MCF 10A (cell line): ENCODE measurements at regions of chr5 and their contacts with region 1.

Region 1: GRCh38 chr5:62155988-62156387 is 150.0 kb upstream of the KIF2A start:
- DNase-seq: no peak
- H3K4me3 Mint-ChIP-seq: no peak overlapping the region
- H3K27ac Mint-ChIP-seq: no peak overlapping the region
- H3K4me1 Mint-ChIP-seq: peaks cover 5% of the 10 kb centered on the region
- H3K27me3 Mint-ChIP-seq: no peaks in the 10 kb centered on the region
- CTCF ChIP-seq: no peak

Region 2: DNA sequence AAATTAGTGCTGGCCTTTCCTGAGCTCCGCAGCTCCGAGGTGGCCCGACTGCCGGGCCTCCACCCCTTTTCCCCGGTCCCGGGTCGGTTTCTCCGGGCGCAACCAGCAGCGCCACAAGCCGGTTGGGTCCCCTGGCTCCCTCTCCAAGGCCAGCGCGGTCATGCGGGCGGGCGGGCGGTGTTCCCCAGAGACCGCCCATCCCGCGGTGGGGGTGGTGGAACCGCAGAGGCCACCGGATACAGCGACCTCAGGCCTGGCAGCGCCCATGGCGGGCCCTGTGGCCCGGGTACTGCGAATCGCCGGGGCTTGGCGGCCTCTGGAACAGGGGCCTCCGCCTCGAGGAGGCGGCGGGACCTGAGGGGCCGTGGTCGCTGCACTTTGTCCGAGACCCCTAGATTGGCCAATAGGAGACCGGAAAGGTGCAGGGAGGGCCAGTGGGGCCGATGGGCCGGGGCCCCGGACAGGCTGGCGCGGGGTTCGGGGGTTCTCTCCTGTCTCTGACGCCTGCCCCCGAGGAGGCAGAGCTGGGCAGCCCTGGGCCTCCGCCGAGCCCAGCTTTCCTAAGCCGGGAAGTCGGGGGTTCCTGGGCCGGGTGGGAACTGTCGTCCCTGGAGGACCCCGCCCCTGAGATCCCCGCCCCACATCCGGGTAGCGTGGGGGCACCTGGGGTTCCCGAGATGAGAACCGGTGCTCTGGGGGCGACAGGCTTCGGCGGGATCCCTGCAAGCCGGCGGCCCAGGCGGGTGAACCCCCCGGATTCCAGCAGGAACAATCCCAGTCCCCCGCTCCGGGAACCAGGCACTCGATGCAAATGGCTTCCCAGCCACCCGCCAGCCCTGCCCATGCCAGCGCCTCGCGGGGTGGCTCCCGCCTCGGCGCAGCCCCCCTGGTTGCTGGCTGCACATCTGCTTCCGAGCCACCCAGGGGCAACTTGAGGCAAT is 530.0 kb before region 1 on chr5:
- CTCF ChIA-PET with region 1: no interaction called
- POLR2A ChIA-PET with region 1: no interaction called
- intact Hi-C with region 1: no loop called
- DNase-seq: no peak
- H3K4me3 Mint-ChIP-seq: no peak overlapping the region
- H3K27ac Mint-ChIP-seq: no peak overlapping the region
- H3K4me1 Mint-ChIP-seq: no peaks in the 10 kb centered on the region
- H3K27me3 Mint-ChIP-seq: no peaks in the 10 kb centered on the region
- CTCF ChIP-seq: no peak

Region 3: GRCh38 chr5:62143268-62144229 is 12.4 kb before region 1 on chr5:
- CTCF ChIA-PET with region 1: interaction called, 11 read pairs
- POLR2A ChIA-PET with region 1: no interaction called
- intact Hi-C with region 1: no loop called
- DNase-seq: peak; percentile 49
- H3K4me3 Mint-ChIP-seq: no peak overlapping the region
- H3K27ac Mint-ChIP-seq: no peak overlapping the region
- H3K4me1 Mint-ChIP-seq: peaks cover 12% of the 10 kb centered on the region
- H3K27me3 Mint-ChIP-seq: no peaks in the 10 kb centered on the region
- CTCF ChIP-seq: peak; percentile 60